ENCODE measurements at regions of chr2 and their contacts with region 1.

Region 1: DNA sequence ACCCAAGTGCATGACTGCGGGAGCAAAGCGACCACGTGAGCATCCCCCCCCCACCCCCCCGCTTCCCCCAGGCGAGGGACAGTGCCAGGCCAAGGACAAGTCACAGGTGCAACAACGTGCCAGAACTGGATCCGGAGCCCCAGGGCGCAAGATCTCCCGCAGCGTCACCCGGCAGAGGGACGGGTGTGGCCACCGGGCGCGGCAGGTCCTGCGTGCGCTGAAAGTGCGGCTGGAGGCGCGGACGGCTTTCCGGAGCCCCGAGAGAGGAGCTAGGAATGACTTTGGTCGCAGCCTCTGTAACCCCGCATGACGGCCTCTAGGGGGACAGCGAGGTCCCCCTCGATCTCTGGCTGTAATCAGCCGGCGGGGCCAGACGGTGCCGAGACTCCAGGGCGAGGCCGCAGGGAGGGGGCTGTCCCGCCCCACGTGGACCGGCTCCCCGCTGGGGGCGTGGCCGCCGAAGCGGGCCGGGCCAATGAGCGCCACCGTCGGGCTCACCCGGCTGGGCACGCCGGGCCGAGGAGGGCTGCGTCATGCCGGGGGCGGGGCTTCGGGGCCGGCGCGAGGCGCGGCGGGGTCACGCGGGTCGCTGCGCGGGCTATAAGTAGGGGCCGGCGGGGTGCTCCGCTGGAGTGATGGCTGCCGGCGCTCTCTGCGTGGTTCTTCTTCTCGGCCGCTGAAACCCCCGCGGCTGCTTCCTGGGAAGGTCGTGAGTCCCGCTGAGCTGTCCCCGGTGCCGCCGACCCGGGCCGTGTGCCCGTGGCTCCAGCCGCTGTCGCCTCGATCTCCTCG is at the start of gene SLC20A1:
- DNase-seq: peak; percentile 98
- H3K4me3 Mint-ChIP-seq: peak within 1 kb of the TSS; percentile 97
- H3K27ac Mint-ChIP-seq: peak within 1 kb of the TSS; percentile 87
- H3K4me1 Mint-ChIP-seq: peaks cover 52% of the 10 kb centered on the region
- H3K27me3 Mint-ChIP-seq: no peaks in the 10 kb centered on the region
- total RNA-seq, gene SLC20A1: 88.8 to 91.3 TPM

Region 2: DNA sequence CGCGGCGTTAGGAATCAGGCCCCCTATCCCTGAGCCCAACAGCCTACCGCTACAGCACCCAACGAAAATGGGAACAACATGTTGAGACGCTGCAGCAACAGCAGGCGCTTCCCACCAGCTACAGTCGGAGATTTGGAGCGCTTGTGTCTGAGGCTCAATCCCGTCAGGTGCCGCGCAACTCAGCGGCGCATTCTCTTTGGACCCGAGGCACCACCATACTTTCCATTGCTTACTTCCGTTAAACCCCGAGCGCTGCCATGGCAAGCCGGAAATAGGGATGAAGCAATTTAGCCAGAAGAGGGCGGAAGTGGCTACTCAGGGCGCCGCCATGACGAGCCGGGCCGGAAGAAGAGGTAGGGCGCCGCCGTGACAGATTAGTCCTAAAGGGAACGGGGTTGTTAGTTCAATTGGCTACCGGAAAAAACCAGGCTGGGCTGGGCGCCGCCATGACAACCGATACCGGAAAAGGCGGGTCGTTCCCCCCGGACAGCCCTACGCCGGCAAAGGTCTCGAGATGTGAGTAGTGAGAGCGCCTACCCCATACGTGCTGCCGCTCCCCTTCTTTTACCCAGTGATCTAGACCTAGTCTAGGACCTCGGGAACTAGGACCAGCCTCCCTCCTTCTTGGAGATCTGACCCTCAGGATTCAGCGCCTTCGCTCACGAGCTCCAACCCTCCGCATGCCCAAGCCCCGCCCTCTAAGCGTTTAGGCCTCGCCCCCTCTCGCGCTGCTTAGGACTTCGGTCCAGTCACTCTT is 61.2 kb before region 1 on chr2 and contains the start of gene CHCHD5:
- CTCF ChIA-PET with region 1: interaction called, 4 read pairs
- POLR2A ChIA-PET with region 1: interaction called, 11 read pairs
- intact Hi-C with region 1: loop called (anchors 5 kb)
- DNase-seq: peak; percentile 97
- H3K4me3 Mint-ChIP-seq: peak within 1 kb of the TSS; percentile 97
- H3K27ac Mint-ChIP-seq: peak within 1 kb of the TSS; percentile 99
- H3K4me1 Mint-ChIP-seq: peaks cover 30% of the 10 kb centered on the region
- H3K27me3 Mint-ChIP-seq: no peaks in the 10 kb centered on the region
- total RNA-seq, gene CHCHD5: 39.3 to 41.4 TPM

Region 3: DNA sequence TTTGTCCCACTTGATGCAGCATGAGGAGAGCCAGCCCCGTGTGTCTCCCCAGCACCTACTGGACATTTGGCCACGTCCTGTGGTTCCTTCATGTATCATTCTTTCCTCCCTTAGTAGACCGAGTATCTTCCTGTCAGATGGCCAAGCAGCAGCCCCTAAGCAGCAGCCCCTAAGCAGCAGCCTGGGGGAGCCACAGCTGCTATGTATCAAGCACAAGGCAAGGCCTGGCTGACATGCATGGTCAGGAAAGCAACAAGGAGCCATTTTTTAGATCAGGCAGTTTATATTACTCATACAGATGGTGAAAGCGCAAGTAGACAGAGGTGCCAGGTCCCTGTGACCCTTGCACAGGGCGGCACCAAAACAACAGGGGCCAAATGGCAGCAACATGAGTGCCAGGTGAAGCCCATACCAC is 39.0 kb before region 1 on chr2:
- CTCF ChIA-PET with region 1: interaction called, 10 read pairs
- POLR2A ChIA-PET with region 1: no interaction called
- intact Hi-C with region 1: no loop called
- DNase-seq: no peak
- H3K4me3 Mint-ChIP-seq: no peak overlapping the region
- H3K27ac Mint-ChIP-seq: no peak overlapping the region
- H3K4me1 Mint-ChIP-seq: no peaks in the 10 kb centered on the region
- H3K27me3 Mint-ChIP-seq: no peaks in the 10 kb centered on the region

Region 4: DNA sequence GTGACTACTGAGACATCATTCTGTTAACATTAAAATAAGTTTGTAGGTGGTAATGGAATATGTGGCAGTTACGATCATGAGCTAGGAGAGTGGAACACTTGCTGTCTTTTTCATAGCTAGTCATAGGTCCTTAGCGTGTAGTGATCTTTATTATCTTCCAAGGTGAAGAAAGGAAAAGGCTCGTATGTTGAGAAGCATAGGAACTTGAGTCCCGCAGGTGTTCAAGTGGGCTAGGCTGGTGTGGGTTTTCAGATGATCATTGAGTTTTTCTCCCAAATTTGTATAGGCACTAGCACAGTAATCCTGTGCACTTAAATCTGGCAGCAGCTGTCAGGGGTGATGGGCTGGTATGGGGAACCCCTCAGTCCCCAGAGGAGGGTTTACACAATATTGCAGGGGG is 11.2 kb after region 1 on chr2:
- CTCF ChIA-PET with region 1: interaction called, 14 read pairs
- POLR2A ChIA-PET with region 1: interaction called, 7 read pairs
- intact Hi-C with region 1: no loop called
- DNase-seq: no peak
- H3K4me3 Mint-ChIP-seq: no peak overlapping the region
- H3K27ac Mint-ChIP-seq: no peak overlapping the region
- H3K4me1 Mint-ChIP-seq: peaks cover 73% of the 10 kb centered on the region
- H3K27me3 Mint-ChIP-seq: no peaks in the 10 kb centered on the region

Region 5: GRCh38 chr2:112692496-112692911 is 47.0 kb after region 1 on chr2:
- CTCF ChIA-PET with region 1: interaction called, 9 read pairs
- POLR2A ChIA-PET with region 1: interaction called, 6 read pairs
- intact Hi-C with region 1: loop called (anchors 1 kb)
- DNase-seq: peak; percentile 87
- H3K4me3 Mint-ChIP-seq: peak overlapping the region; percentile 30
- H3K27ac Mint-ChIP-seq: peak overlapping the region; percentile 84
- H3K4me1 Mint-ChIP-seq: peaks cover 33% of the 10 kb centered on the region
- H3K27me3 Mint-ChIP-seq: no peaks in the 10 kb centered on the region

Measured in activated CD4-positive, alpha-beta memory T cell treated with anti-CD3 and anti-CD28 coated beads for 36 hours (primary cell).